Activated naive CD4-positive, alpha-beta T cell treated with anti-CD3 and anti-CD28 coated beads for 36 hours (primary cell): ENCODE measurements at regions of chr16 and their contacts with region 1.

Region 1: GRCh38 chr16:21554795-21555585 is 44.4 kb upstream of the METTL9 start:
- DNase-seq: peak; percentile 96
- H3K4me3 Mint-ChIP-seq: peak overlapping the region; percentile 33
- H3K27ac Mint-ChIP-seq: no peak overlapping the region
- H3K4me1 Mint-ChIP-seq: peaks cover 9% of the 10 kb centered on the region
- H3K27me3 Mint-ChIP-seq: peaks cover 10% of the 10 kb centered on the region

Region 2: GRCh38 chr16:21263640-21264570 is 291.1 kb before region 1 on chr16:
- CTCF ChIA-PET with region 1: no interaction called
- intact Hi-C with region 1: no loop called
- DNase-seq: no peak
- H3K4me3 Mint-ChIP-seq: no peak overlapping the region
- H3K27ac Mint-ChIP-seq: no peak overlapping the region
- H3K4me1 Mint-ChIP-seq: no peaks in the 10 kb centered on the region
- H3K27me3 Mint-ChIP-seq: no peaks in the 10 kb centered on the region

Region 3: DNA sequence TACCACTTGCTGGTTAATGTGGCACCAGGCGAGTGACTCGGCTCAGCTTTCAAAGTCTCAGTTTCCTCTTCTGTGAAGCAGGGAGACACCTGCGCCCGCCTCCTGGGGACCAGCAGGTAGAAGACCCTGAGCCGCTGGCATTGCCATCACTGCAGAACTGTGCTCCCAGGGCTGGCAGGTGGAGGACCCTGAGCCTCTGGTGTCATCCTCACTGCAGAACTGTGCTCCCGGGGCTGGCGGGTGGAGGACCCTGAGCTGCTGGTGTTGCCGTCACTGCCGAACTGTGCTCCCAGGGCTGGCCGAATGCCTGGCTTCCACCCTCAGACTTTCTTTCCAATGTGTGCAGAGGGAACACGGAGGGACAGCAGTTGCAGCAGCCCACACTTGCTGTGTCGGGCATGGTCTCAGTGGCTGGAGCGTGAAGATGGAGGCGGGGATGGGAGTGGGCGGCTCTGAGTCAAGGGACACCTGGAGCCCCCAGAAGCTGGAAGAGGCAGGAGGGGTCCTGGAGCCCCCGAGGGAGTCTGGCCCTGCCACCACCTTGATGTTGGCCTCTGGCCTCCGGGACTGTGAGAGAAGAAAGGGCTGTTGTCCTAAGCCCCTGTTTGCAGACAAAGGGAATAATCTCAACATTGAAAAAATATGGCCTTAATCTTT is 31.5 kb before region 1 on chr16:
- CTCF ChIA-PET with region 1: interaction called, 3 read pairs
- intact Hi-C with region 1: loop called (anchors 1 kb)
- DNase-seq: no peak
- H3K4me3 Mint-ChIP-seq: no peak overlapping the region
- H3K27ac Mint-ChIP-seq: no peak overlapping the region
- H3K4me1 Mint-ChIP-seq: no peaks in the 10 kb centered on the region
- H3K27me3 Mint-ChIP-seq: no peaks in the 10 kb centered on the region

Region 4: DNA sequence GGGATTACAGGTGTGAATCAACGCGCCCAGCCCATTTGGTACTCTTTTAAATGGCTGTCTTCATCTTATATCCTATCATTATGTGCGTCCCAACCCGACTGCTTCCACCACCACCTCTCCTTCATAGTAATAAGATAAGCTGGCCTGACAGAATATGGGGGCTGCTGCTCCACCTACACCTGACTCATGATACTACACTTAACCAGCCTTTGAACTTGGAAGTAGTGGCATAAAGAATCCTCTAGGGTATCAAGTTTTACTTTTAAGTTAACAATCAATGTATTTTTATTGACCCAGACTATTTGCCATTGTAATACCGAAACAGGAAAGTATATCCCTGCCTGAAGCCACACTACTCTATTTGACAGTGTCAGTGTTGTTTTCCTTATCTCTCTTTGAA is 427.1 kb after region 1 on chr16:
- CTCF ChIA-PET with region 1: no interaction called
- intact Hi-C with region 1: no loop called
- DNase-seq: no peak
- H3K4me3 Mint-ChIP-seq: no peak overlapping the region
- H3K27ac Mint-ChIP-seq: no peak overlapping the region
- H3K4me1 Mint-ChIP-seq: no peaks in the 10 kb centered on the region
- H3K27me3 Mint-ChIP-seq: no peaks in the 10 kb centered on the region

Region 5: DNA sequence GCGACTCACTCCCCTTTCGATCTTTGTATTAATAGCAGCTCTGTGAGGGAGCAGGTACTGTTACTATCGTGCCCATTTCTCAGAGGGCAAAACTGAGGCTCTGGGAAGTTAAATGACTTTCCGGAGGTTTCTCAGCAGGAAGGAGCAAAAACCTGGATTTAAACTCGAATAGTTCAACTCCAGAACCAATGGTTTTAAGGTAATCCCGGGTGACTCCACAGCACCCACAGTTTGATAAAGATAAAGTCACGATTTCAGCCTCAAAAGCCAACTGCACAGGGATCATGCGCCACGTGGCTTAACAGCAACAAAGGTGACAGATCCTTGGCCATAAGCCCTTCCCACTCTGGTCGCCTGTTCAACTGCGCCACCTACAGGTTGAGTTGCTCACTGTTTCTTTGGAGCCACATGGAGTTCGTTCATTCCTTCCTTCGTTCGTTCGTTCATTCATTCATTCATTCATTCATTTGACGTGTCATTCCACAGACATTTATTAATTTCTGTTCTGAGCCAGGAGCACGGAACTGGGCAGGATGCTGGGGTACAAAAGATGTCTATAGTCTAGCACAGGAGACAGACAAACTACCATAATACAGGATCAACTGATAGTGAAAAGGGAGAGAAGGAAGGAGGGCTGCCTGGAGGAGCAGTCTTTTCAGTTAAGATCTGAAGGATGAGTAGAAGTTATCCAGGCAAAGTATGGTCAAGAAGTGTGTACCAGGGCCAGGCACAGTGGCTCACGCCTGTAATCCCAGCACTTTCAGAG is 1393.8 kb after region 1 on chr16:
- CTCF ChIA-PET with region 1: no interaction called
- intact Hi-C with region 1: loop called (anchors 5 kb)
- DNase-seq: peak; percentile 89
- H3K4me3 Mint-ChIP-seq: no peak overlapping the region
- H3K27ac Mint-ChIP-seq: no peak overlapping the region
- H3K4me1 Mint-ChIP-seq: peaks cover 8% of the 10 kb centered on the region
- H3K27me3 Mint-ChIP-seq: peaks cover 38% of the 10 kb centered on the region

Region 6: DNA sequence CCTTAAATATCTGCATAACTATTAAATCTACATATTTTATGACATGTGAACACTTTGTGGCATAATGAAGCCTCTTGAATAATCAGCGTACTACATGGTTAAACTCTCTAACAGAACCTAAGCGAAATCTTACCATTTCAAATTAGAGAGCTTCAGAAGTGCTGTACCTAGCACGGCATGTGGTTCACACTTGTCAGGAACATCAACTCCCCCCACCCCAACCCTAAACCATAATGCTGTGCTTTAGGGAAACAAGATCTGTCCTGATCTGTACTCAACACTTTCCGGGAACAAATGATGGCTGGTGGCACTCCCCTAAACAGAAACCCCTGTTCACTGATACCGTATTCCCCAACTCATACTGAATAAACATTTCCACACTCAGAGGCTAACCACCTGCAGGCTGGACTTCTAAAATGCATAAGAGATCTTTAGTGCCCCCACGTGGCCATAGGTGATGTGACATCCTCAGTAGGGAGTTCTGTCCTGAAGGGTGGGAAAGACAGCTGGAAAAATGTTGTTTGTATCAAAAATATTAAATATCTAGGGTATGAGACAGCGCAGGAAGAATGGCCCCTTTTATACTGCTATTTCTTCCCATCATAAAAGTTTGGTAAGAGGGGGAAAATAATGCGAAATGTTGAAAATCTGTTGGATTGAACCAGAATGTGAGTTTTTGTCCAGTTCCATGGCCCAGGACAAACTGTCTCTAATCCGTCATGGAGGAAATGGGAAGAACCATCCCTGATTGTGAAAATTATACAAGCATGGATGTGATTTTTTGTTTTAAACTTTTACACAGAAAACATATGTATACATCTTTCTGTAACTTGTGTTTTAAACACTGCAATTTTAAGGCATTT is 1505.7 kb after region 1 on chr16:
- CTCF ChIA-PET with region 1: no interaction called
- intact Hi-C with region 1: loop called (anchors 2 kb)
- DNase-seq: peak; percentile 78
- H3K4me3 Mint-ChIP-seq: no peak overlapping the region
- H3K27ac Mint-ChIP-seq: no peak overlapping the region
- H3K4me1 Mint-ChIP-seq: peaks cover 2% of the 10 kb centered on the region
- H3K27me3 Mint-ChIP-seq: peaks cover 19% of the 10 kb centered on the region